H1 (cell line): ENCODE measurements at regions of chr18 and their contacts with region 1.

Region 1: DNA sequence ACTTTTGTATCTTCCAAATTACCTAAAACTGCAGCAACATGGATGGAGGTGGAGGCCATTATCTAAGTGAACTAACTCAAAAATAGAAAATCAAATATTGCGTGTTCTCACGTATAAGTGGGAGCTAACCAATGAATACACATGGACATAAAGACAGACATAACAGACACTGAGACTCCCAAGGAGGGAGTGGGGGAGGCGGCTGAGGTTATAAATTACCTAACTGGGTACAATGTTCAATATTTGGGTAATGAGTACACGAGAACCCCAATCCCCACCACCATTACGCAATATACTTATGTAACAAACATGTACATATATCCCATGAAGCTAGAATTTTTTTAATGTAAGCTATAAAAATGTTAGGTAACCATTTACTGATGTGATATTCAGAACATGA is 119.8 kb downstream of the RTTN start:
- DNase-seq: no peak
- H3K4me3 ChIP-seq: no peak overlapping the region
- H3K27ac ChIP-seq: no peak overlapping the region
- H3K4me1 ChIP-seq: no peaks in the 10 kb centered on the region
- H3K27me3 ChIP-seq: no peaks in the 10 kb centered on the region
- CTCF ChIP-seq: no peak
- EP300 ChIP-seq: no peak
- POLR2A ChIP-seq: no peak
- RAD21 ChIP-seq: no peak

Region 2: DNA sequence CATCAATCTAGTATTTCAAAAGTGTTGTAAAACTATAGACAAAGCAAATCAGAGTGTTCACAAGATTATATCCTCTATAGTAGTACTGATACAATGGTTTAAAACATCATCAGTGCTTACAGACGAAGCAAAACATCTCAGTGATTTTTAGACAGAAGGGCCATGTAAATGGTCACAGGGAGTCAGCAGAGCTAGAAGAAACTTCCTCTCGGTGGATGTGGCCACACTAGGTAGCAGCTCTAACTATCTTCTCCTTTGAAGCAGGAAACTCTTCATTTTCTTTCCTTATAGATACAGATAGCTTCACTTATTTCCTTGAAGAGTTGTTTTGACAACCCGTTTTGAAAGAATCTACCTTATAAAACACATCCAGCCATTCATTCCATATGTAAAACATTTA is 57.6 kb before region 1 on chr18:
- CTCF ChIA-PET with region 1: no interaction called
- POLR2A ChIA-PET with region 1: no interaction called
- DNase-seq: no peak
- H3K4me3 ChIP-seq: no peak overlapping the region
- H3K27ac ChIP-seq: no peak overlapping the region
- H3K4me1 ChIP-seq: no peaks in the 10 kb centered on the region
- H3K27me3 ChIP-seq: no peaks in the 10 kb centered on the region
- CTCF ChIP-seq: no peak
- EP300 ChIP-seq: no peak
- POLR2A ChIP-seq: no peak
- RAD21 ChIP-seq: no peak

Region 3: GRCh38 chr18:70068981-70069380 is 16.7 kb before region 1 on chr18:
- CTCF ChIA-PET with region 1: interaction called, 10 read pairs
- POLR2A ChIA-PET with region 1: no interaction called
- DNase-seq: no peak
- H3K4me3 ChIP-seq: no peak overlapping the region
- H3K27ac ChIP-seq: no peak overlapping the region
- H3K4me1 ChIP-seq: no peaks in the 10 kb centered on the region
- H3K27me3 ChIP-seq: peaks cover 0 to 1% (median 0%) of the 10 kb centered on the region in 4 experiments; a peak in 1 of 7 replicates
- CTCF ChIP-seq: no peak
- EP300 ChIP-seq: no peak
- POLR2A ChIP-seq: no peak
- RAD21 ChIP-seq: no peak